ENCODE measurements at regions of chr4 and their contacts with region 1.

Region 1: GRCh38 chr4:17194586-17194985 is 296.1 kb upstream of the LDB2 start:
- DNase-seq: no peak
- H3K4me3 ChIP-seq: no peak overlapping the region
- H3K27ac ChIP-seq: no peak overlapping the region
- H3K4me1 ChIP-seq: no peaks in the 10 kb centered on the region
- H3K27me3 ChIP-seq: no peaks in the 10 kb centered on the region
- CTCF ChIP-seq: no peak

Region 2: DNA sequence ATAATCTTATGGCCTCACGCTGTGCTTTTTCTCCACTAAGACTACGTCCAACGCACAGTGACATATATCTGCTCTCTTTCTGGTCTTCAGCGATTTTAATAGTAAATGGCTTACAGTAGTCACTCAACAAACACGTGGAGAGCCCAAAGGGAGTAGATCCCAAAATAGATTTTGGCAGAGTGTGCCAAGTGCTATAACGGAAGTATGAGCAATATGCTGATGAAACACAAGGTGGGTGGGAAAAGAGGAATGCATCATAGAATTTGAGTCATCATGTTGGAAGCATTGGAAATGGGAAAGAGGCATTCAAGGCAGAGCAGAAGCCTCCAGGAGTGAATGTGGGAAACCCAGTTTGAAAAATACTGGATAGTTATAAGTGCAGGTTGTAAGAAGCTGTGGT is 167.1 kb before region 1 on chr4:
- CTCF ChIA-PET with region 1: no interaction called
- dilution Hi-C with region 1: no loop called
- in situ Hi-C with region 1: no loop called
- intact Hi-C with region 1: no loop called
- DNase-seq: peak; percentile 33
- H3K4me3 ChIP-seq: no peak overlapping the region
- H3K27ac ChIP-seq: no peak overlapping the region
- H3K4me1 ChIP-seq: peaks cover 38% of the 10 kb centered on the region
- H3K27me3 ChIP-seq: no peaks in the 10 kb centered on the region
- CTCF ChIP-seq: no peak

Region 3: GRCh38 chr4:17092736-17093437 is 101.7 kb before region 1 on chr4:
- CTCF ChIA-PET with region 1: no interaction called
- dilution Hi-C with region 1: loop called (anchors 5 kb)
- in situ Hi-C with region 1: no loop called
- intact Hi-C with region 1: no loop called
- DNase-seq: no peak
- H3K4me3 ChIP-seq: no peak overlapping the region
- H3K27ac ChIP-seq: no peak overlapping the region
- H3K4me1 ChIP-seq: no peaks in the 10 kb centered on the region
- H3K27me3 ChIP-seq: no peaks in the 10 kb centered on the region
- CTCF ChIP-seq: no peak

Region 4: GRCh38 chr4:17232566-17233253 is 38.1 kb after region 1 on chr4:
- CTCF ChIA-PET with region 1: no interaction called
- dilution Hi-C with region 1: loop called (anchors 5 kb)
- in situ Hi-C with region 1: no loop called
- intact Hi-C with region 1: no loop called
- DNase-seq: no peak
- H3K4me3 ChIP-seq: no peak overlapping the region
- H3K27ac ChIP-seq: no peak overlapping the region
- H3K4me1 ChIP-seq: no peaks in the 10 kb centered on the region
- H3K27me3 ChIP-seq: no peaks in the 10 kb centered on the region
- CTCF ChIP-seq: no peak

Region 5: GRCh38 chr4:17397611-17398010 is 203.0 kb after region 1 on chr4:
- CTCF ChIA-PET with region 1: no interaction called
- dilution Hi-C with region 1: no loop called
- in situ Hi-C with region 1: no loop called
- intact Hi-C with region 1: no loop called
- DNase-seq: no peak
- H3K4me3 ChIP-seq: no peak overlapping the region
- H3K27ac ChIP-seq: no peak overlapping the region
- H3K4me1 ChIP-seq: no peaks in the 10 kb centered on the region
- H3K27me3 ChIP-seq: no peaks in the 10 kb centered on the region
- CTCF ChIP-seq: no peak

Region 6: DNA sequence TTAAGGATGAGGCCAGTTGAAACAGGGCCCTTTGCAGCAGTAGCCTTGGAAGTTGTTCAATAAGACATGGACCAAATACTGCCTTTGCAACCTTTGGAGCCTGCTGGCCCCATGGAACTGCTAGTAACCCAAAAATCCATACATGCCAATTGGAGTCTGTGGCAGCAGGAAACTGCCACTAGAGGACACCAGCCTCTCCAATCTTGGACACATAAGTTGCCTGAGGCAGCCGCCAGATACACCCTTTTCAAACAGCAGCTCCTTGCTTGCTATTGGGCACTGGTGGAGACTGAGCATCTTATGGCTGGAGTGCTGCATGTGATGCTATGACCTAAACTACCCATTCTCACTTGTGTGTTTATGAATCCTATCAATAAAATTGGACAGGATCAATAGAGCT is 367.6 kb after region 1 on chr4:
- CTCF ChIA-PET with region 1: no interaction called
- dilution Hi-C with region 1: no loop called
- in situ Hi-C with region 1: no loop called
- intact Hi-C with region 1: no loop called
- DNase-seq: no peak
- H3K4me3 ChIP-seq: no peak overlapping the region
- H3K27ac ChIP-seq: no peak overlapping the region
- H3K4me1 ChIP-seq: peaks cover 11% of the 10 kb centered on the region
- H3K27me3 ChIP-seq: no peaks in the 10 kb centered on the region
- CTCF ChIP-seq: peak in 1 of 2 donors; percentile 2

Region 7: DNA sequence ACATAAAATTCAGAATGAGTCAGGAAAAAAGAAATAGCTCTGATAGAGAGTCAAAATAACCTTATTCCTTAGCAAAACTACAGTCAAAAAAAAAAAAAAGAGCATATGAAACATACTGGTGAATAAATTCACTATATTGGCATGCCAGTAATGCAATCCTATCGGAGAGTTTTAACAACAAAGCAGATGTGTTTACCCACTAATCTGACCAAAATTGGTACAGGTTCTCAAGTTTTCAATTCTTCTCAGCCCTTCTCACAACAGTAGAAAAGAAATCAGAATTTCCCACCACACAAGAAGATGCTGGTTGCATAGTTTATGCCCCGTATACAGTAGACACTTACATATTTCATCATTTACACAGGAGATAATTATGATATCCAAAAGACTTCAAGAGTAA is 767.6 kb after region 1 on chr4:
- CTCF ChIA-PET with region 1: no interaction called
- dilution Hi-C with region 1: no loop called
- in situ Hi-C with region 1: no loop called
- intact Hi-C with region 1: no loop called
- DNase-seq: no peak
- H3K4me3 ChIP-seq: no peak overlapping the region
- H3K27ac ChIP-seq: no peak overlapping the region
- H3K4me1 ChIP-seq: no peaks in the 10 kb centered on the region
- H3K27me3 ChIP-seq: no peaks in the 10 kb centered on the region
- CTCF ChIP-seq: no peak